Heart right ventricle (tissue), 16 donors: ENCODE measurements at regions of chr1 and their contacts with region 1.

Region 1: DNA sequence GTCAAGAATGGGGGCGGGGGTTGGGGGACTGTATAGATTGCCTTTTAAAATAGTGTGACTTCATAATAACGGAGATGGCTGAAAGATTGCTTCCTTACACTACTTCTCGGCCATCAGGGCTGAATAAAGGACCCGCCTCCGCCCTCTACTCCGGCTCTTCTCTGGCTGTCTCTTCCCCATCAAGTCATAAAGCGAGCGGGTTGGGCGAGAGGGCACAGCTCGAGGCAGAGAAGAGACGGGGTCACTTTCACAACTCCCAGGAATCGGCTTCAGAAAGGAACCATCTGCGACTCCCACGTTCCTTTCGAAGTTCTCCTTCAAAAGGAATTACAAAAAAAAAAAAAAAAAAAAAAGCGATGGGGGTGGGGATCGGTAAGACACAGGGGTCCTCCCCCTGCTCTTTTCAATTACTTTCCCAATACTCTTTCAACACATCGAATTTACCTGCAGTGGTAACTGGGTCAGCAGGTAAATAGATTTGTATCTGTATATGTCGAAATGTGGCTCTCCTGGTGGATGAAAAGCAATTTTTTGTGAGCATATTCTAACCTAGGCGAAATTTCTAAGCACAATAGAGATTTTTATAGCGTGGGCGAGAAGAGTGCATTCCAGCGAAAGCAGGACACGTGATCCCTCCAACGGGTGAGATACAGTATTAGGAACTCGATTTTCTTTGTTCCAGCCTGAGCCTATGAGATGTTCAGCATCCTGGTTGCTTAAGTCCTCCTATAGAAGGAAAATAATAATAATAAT is 2.0 kb downstream of the LRRC7 start:
- DNase-seq: no peak
- ATAC-seq: no peak
- H3K4me3 ChIP-seq: peak overlapping the region in 4 of 10 donors; percentile 14 to 59 (median 55)
- H3K27ac ChIP-seq: no peak overlapping the region
- H3K4me1 ChIP-seq: peaks cover 0 to 16% (median 11%) of the 10 kb centered on the region in 9 donors
- H3K27me3 ChIP-seq: peaks cover 6 to 66% (median 55%) of the 10 kb centered on the region in 7 donors
- CTCF ChIP-seq: no peak

Region 2: DNA sequence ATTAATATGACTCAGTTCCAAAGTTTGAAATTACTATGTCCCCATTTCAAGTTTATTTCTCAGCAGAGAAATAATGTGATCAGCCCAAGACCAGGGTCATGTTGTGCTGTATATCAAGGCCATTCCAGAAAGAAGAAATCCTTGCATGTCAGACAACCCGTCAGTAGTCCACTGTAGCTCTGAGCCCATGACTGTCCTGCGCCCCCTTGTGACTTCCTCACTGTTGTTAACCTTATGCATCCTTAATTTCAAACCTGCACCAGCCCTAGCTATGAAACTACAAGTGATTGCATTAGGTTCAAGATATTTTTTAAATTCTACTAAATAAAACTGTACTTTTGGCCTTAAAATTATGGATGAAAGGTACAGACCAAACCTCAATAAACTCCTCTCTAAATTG is 131.0 kb after region 1 on chr1:
- intact Hi-C with region 1: loop called in 1 of 10 experiments (anchors 5 kb)
- DNase-seq: no peak
- ATAC-seq: no peak
- H3K4me3 ChIP-seq: no peak overlapping the region
- H3K27ac ChIP-seq: no peak overlapping the region
- H3K4me1 ChIP-seq: no peaks in the 10 kb centered on the region
- H3K27me3 ChIP-seq: no peaks in the 10 kb centered on the region
- CTCF ChIP-seq: no peak